ENCODE measurements at regions of chr18 and their contacts with region 1.

Region 1: GRCh38 chr18:11834772-11835171 is 16.4 kb upstream of the CHMP1B start:
- DNase-seq: no peak
- H3K4me3 ChIP-seq: no peak overlapping the region
- H3K27ac ChIP-seq: no peak overlapping the region
- H3K4me1 ChIP-seq: 0 out of 7 replicates have a peak, but pooled peaks cover 0 to 7% (median 0%) of the 10 kb centered on the region in 4 experiments
- H3K27me3 ChIP-seq: no peaks in the 10 kb centered on the region
- CTCF ChIP-seq: no peak
- EP300 ChIP-seq: no peak
- POLR2A ChIP-seq: no peak
- RAD21 ChIP-seq: no peak

Region 2: DNA sequence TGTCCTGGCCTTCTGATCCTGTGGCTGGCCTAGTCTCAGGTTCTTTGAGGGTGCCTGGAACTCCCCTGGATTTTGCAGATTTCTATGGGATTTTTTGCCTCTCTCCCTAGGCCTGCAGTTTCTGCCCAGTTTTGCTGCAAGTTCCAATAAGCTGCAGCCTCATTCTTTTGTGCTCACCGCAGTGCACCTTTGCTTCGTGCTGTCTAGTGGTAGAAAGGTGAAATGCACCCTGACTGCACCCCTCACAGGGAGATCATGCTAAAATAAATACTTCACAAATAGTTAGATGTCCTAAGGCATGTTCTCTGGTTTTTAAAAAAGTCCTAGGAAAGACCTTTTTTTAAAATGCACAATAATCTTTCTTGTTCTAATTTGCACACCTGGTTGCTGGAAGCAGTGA is 73.2 kb before region 1 on chr18:
- CTCF ChIA-PET with region 1: interaction called, 11 read pairs
- POLR2A ChIA-PET with region 1: no interaction called
- DNase-seq: no peak
- H3K4me3 ChIP-seq: no peak overlapping the region
- H3K27ac ChIP-seq: no peak overlapping the region
- H3K4me1 ChIP-seq: peaks cover 0 to 13% (median 7%) of the 10 kb centered on the region in 4 experiments
- H3K27me3 ChIP-seq: no peaks in the 10 kb centered on the region
- CTCF ChIP-seq: peak; percentile 30 to 55 (median 43); a peak in 3 of 4 replicates
- EP300 ChIP-seq: no peak
- POLR2A ChIP-seq: no peak
- RAD21 ChIP-seq: peak; percentile 36 to 51

Region 3: GRCh38 chr18:12041561-12041960 is 206.8 kb after region 1 on chr18:
- CTCF ChIA-PET with region 1: no interaction called
- POLR2A ChIA-PET with region 1: no interaction called
- DNase-seq: no peak
- H3K4me3 ChIP-seq: no peak overlapping the region
- H3K27ac ChIP-seq: no peak overlapping the region
- H3K4me1 ChIP-seq: no peaks in the 10 kb centered on the region
- H3K27me3 ChIP-seq: peaks cover 0 to 13% (median 10%) of the 10 kb centered on the region in 4 experiments; a peak in 6 of 7 replicates
- CTCF ChIP-seq: no peak
- EP300 ChIP-seq: no peak
- POLR2A ChIP-seq: no peak
- RAD21 ChIP-seq: no peak

Region 4: GRCh38 chr18:12060182-12060870 is 225.6 kb after region 1 on chr18:
- CTCF ChIA-PET with region 1: no interaction called
- POLR2A ChIA-PET with region 1: no interaction called
- DNase-seq: no peak
- H3K4me3 ChIP-seq: no peak overlapping the region
- H3K27ac ChIP-seq: no peak overlapping the region
- H3K4me1 ChIP-seq: no peaks in the 10 kb centered on the region; a peak in 1 of 7 replicates
- H3K27me3 ChIP-seq: no peaks in the 10 kb centered on the region
- CTCF ChIP-seq: no peak
- EP300 ChIP-seq: no peak
- POLR2A ChIP-seq: no peak
- RAD21 ChIP-seq: no peak

Measured in H1 (cell line).